Heart right ventricle (tissue), 16 donors: ENCODE measurements at regions of chr17 and their contacts with region 1.

Region 1: GRCh38 chr17:45385331-45385997 is 47.2 kb downstream of the ARHGAP27 start:
- DNase-seq: peak; percentile 90 to 91
- ATAC-seq: peak; percentile 91 to 97 (median 95)
- H3K4me3 ChIP-seq: no peak overlapping the region
- H3K27ac ChIP-seq: peak overlapping the region in 1 of 10 donors; percentile 49
- H3K4me1 ChIP-seq: peaks cover 0 to 47% (median 20%) of the 10 kb centered on the region in 9 donors
- H3K27me3 ChIP-seq: peaks cover 0 to 8% (median 0%) of the 10 kb centered on the region in 7 donors
- CTCF ChIP-seq: peak; percentile 96 to 100 (median 98)

Region 2: DNA sequence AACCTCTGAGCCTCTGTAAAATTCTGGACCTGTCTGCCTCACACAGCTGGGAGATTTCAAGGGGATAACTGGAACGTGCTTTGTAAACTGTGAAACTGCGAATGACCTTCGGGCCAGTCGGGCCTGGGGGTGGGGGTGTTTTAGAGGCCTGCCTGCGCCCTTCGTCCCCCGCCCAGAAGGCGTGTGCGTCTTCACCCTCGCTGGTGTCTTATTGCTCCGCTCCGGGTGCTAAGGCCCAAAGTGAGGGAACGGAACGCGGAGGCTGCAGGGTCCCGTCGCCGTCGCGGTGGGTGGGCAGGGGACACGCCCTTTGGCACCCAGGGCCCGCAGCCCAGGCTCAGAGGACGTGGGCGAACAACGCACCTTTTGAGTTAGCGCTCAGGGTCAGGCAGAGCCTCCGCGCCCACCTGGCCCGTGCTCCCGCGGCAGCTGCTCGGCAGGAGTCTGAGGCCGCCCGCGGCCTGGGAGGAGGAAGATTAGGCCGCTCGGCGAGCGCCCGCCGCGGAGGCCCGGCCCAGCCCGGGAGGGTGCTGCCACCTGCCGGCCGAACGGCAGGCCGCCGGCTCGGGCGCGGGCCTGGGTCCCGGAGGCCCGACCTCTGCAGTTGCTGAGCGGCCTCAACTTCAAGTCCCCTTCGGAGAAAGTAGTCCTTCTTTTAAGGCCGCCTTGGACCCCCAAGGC is 363.7 kb before region 1 on chr17:
- intact Hi-C with region 1: no loop called
- DNase-seq: peak; percentile 44 to 81
- ATAC-seq: peak; percentile 76 to 86 (median 80)
- H3K4me3 ChIP-seq: peak overlapping the region; percentile 4 to 61 (median 53)
- H3K27ac ChIP-seq: peak overlapping the region in 9 of 10 donors; percentile 61 to 81 (median 71)
- H3K4me1 ChIP-seq: peaks cover 13 to 46% (median 38%) of the 10 kb centered on the region in 9 donors
- H3K27me3 ChIP-seq: peaks cover 0 to 44% (median 0%) of the 10 kb centered on the region in 7 donors
- CTCF ChIP-seq: peak; percentile 77 to 99 (median 92)

Region 3: DNA sequence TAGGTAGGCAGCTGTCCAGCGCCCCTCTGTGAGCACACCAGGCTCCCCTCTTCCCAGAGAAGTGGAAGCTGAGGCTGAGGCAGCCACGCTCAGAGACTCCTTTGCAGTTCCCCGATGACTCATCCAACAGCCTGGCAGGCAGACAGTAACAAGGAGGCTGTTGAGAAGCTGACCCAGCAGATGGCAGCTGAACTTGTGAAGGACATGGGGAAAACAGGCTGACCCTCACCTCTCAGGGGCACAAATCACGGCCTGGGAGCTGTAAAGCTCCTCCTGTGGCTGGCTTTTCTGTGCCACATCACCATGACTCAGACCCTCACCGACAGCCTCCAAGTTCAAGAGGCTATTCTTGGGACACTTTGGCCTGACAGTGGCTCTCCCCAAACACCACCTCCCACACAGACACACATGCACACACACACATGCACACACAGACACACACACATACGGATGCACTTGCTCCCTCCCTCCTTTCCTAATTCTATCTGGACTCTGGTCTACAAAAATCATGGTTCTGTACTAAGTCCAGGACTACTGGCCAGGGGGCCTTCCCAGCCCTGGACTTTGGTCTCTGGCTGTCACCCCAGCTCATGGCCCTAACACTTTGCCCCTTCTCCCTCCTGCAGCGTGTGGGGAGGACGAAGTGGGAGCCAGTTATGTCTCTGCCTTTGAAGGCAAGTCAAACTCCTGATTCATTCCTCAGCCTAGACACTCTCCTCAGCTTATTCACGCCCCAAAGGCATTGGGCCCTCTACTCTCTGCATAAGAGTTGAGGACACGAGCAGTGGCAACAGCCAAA is 91.9 kb before region 1 on chr17:
- intact Hi-C with region 1: loop called in 1 of 10 experiments (anchors 5 kb)
- DNase-seq: peak; percentile 74 to 75
- ATAC-seq: peak; percentile 63 to 83 (median 74)
- H3K4me3 ChIP-seq: no peak overlapping the region
- H3K27ac ChIP-seq: peak overlapping the region; percentile 70 to 89 (median 84)
- H3K4me1 ChIP-seq: peaks cover 60 to 100% (median 100%) of the 10 kb centered on the region in 9 donors
- H3K27me3 ChIP-seq: no peaks in the 10 kb centered on the region
- CTCF ChIP-seq: peak in 4 of 9 donors; percentile 10 to 31 (median 18)